ENCODE measurements at regions of chr10 and their contacts with region 1.

Region 1: GRCh38 chr10:77641788-77642397 is 4.3 kb upstream of the KCNMA1 start:
- DNase-seq: peak; percentile 62
- CTCF ChIP-seq: peak; percentile 66

Region 2: GRCh38 chr10:77173615-77174461 is 468.1 kb before region 1 on chr10:
- CTCF ChIA-PET with region 1: interaction called, 147 read pairs
- POLR2A ChIA-PET with region 1: no interaction called
- DNase-seq: peak; percentile 53
- CTCF ChIP-seq: peak; percentile 92

Region 3: DNA sequence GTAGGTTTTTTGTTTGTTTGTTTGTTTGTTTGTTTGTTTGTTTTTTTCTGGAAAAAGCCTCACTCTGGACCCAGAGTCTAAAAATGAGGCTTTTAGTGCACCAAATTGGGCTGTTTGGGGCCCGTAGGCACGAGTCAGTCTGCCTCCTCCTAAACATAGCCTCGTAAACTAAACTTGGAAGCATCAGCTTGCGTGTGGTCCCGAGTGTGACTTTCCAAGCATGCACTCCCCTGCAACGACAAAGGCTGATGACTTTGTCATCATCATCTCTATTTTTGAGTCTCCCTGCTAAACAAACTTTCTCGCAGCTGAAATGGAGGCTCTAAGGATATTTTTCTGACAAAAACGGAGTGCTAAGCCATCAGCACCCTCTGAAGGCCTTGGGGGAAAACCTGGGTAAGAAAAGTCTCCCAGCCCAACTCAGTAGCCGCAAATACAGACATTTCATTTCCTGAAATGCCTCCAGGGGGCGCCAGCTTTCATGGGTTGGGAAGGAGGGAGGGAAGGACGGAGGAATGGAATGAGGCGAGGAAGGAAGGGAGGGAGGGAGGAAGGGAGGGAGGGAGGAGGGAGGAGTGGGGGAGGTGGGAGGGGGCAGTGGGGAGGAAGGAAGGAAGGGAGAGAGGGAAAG is 250.2 kb before region 1 on chr10:
- CTCF ChIA-PET with region 1: interaction called, 22 read pairs
- POLR2A ChIA-PET with region 1: no interaction called
- DNase-seq: peak; percentile 51
- CTCF ChIP-seq: peak; percentile 66

Region 4: GRCh38 chr10:77653210-77653609 is 11.3 kb after region 1 on chr10:
- CTCF ChIA-PET with region 1: interaction called, 10 read pairs
- POLR2A ChIA-PET with region 1: no interaction called
- DNase-seq: no peak
- CTCF ChIP-seq: no peak

Region 5: DNA sequence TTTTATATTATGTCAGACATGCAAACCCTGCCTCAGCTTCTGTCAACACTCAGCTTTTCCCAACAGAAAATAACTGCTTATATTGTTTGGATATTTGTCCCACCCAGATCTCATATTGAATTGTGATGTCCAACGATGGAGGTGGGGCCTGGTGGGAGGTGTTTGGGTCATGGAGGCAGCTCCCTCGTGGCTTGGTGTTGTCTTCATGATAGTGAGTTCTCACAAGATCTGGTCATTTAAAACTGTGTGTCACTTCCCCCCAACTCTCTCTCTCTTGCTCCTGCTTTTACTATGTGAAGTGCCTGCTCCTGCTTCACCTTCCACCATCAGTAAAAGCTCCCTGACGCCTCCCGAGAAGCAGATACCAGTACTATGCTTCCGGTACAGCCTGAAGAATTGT is 81.5 kb after region 1 on chr10:
- CTCF ChIA-PET with region 1: no interaction called
- POLR2A ChIA-PET with region 1: no interaction called
- DNase-seq: no peak
- CTCF ChIP-seq: no peak